Heart right ventricle (tissue), 16 donors: ENCODE measurements at regions of chr18 and their contacts with region 1.

Region 1: GRCh38 chr18:8948471-8949149 is 153.9 kb upstream of the NDUFV2 start:
- DNase-seq: no peak
- ATAC-seq: peak in 3 of 8 donors; percentile 16 to 71 (median 25)
- H3K4me3 ChIP-seq: no peak overlapping the region
- H3K27ac ChIP-seq: no peak overlapping the region
- H3K4me1 ChIP-seq: peaks cover 0 to 9% (median 0%) of the 10 kb centered on the region in 9 donors
- H3K27me3 ChIP-seq: peaks cover 0 to 4% (median 0%) of the 10 kb centered on the region in 7 donors
- CTCF ChIP-seq: no peak

Region 2: GRCh38 chr18:8536226-8536625 is 412.4 kb before region 1 on chr18:
- intact Hi-C with region 1: loop called in 1 of 10 experiments (anchors 5 kb)
- DNase-seq: no peak
- ATAC-seq: no peak
- H3K4me3 ChIP-seq: no peak overlapping the region
- H3K27ac ChIP-seq: no peak overlapping the region
- H3K4me1 ChIP-seq: no peaks in the 10 kb centered on the region
- H3K27me3 ChIP-seq: no peaks in the 10 kb centered on the region
- CTCF ChIP-seq: no peak

Region 3: DNA sequence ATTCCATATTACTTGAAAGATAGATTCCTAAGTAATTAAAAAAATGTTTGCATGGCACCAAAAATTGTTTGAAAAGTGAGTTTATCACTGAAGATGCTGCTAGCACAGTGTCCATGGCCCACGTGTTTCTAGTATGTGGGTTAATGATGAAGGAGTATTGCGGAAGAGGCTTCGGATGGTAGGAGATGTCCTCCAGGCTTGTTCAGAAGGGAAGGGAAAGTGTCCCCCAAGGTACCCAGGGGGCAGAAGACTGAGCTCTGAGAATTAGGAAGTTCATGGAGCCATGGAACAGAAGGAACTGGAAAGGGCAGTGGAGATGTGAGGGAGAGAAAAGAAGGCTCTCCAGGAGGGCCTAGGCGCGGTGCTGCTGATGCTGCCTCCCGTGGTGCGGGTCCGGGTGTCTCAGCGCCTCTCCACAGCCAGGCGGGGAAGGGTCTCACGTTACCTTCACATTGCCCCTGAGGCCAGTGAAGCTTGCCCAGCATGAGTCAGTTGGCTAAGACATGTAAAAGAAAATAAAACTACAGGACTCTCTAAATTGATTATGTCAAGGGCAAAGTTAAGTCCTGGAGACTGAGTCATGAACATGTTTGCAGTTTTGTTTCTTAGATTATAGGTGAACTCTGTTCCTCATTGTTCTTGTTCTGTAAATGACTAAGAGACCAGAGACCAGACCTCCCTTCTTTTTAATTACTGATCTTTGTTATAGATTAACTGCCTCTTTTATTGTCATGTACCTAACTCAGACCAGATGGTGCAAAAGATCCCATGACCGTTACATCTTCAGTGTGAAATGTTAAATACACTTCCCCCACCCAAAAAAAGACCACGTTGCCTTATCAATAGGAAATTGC is 154.2 kb before region 1 on chr18:
- intact Hi-C with region 1: loop called in 1 of 10 experiments (anchors 10 kb)
- DNase-seq: no peak
- ATAC-seq: no peak
- H3K4me3 ChIP-seq: no peak overlapping the region
- H3K27ac ChIP-seq: no peak overlapping the region
- H3K4me1 ChIP-seq: peaks cover 0 to 6% (median 0%) of the 10 kb centered on the region in 9 donors
- H3K27me3 ChIP-seq: no peaks in the 10 kb centered on the region
- CTCF ChIP-seq: no peak